Activated naive CD4-positive, alpha-beta T cell treated with anti-CD3 and anti-CD28 coated beads for 36 hours (primary cell): ENCODE measurements at regions of chr1 and their contacts with region 1.

Region 1: DNA sequence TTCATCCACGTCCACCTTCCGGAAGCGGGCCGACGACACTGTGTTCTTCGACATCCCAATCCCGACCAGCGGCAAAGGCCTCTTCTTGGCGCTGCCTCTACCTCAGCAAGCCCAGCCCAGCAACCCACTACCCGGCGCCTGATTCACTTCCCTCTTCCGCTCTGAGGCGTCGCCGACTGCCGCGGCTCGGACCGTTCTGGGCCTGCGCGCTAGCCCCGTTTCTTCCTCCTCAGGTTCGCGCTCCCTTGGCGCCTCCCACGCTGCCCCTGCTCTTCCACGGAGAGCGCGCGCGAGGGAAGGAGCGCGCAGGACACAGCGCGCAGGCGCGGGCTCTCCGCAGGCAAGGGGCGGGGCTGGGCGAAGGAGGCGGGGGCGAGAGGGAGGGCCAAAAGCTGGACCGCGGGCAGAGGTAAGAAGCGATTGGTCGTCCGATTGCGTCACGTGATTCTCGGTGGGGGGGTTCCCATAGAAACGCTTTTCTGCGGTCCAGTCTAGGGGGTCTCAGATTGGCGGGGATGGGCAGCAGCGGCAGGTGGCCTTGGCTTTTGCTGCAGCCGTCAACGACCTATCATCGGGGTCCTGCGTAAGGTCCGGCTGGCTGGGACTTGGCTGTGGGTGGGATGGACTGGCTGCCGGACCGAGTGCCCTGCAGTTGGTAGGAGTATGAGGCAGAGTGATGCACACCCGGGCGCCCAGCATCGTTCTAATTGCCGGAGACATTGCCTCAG is at the start of gene ARPC5:
- DNase-seq: peak; percentile 97
- H3K4me3 Mint-ChIP-seq: peak within 1 kb of the TSS; percentile 98
- H3K27ac Mint-ChIP-seq: peak within 1 kb of the TSS; percentile 99
- H3K4me1 Mint-ChIP-seq: peaks cover 27% of the 10 kb centered on the region
- H3K27me3 Mint-ChIP-seq: no peaks in the 10 kb centered on the region
- total RNA-seq, gene ARPC5: 162 to 164 TPM

Region 2: DNA sequence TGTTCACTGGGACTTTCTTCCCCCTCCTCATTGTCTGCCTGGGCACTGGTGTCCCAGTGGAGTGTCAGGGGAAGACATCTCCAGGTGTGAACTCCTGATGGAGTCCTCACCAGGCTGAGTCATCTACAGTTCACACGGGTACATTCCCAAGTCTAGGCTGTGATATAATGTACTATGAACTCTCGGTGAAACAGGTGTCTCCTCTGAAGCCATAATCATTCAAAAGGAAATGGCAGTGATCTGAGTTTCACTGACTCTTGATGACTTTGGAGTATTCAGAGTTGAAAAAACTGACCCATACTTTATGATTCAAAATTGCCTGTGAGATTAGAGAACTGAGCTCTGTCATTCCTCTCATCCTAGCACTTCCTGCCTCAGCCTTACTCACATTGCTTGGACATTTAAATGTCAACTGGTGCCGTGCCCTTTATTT is 440.6 kb before region 1 on chr1:
- CTCF ChIA-PET with region 1: no interaction called
- intact Hi-C with region 1: loop called (anchors 1 kb)
- DNase-seq: no peak
- H3K4me3 Mint-ChIP-seq: no peak overlapping the region
- H3K27ac Mint-ChIP-seq: no peak overlapping the region
- H3K4me1 Mint-ChIP-seq: peaks cover 12% of the 10 kb centered on the region
- H3K27me3 Mint-ChIP-seq: peaks cover 5% of the 10 kb centered on the region

Region 3: DNA sequence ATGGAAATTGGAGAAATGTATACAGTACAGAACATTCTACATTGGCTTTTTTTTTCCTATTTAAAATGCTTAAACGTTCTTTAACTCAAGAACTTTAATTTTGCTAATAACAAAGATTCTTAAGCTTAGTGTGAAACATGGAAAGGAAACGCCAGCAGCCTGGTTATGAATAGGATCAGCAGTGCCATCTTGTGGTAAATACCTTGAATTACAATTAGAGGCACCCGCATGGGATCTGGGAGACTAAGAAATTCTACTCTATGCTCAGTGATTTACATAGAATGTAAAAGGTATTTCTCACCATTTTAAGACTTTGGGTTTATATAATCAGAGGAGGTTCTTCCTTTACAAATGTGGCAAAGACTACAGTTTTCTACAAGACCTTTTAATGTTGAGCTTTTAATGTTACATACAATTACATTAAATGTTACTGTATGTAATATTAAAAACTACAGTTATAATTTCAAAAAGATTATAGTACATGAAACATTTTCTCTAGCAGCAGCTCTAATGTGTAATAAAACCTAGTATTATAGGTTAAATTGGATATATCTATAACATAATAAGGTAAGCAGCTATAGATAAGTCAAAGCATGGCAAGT is 49.4 kb after region 1 on chr1:
- CTCF ChIA-PET with region 1: interaction called, 12 read pairs
- intact Hi-C with region 1: loop called (anchors 1 kb)
- DNase-seq: peak; percentile 41
- H3K4me3 Mint-ChIP-seq: no peak overlapping the region
- H3K27ac Mint-ChIP-seq: no peak overlapping the region
- H3K4me1 Mint-ChIP-seq: peaks cover 8% of the 10 kb centered on the region
- H3K27me3 Mint-ChIP-seq: no peaks in the 10 kb centered on the region

Region 4: DNA sequence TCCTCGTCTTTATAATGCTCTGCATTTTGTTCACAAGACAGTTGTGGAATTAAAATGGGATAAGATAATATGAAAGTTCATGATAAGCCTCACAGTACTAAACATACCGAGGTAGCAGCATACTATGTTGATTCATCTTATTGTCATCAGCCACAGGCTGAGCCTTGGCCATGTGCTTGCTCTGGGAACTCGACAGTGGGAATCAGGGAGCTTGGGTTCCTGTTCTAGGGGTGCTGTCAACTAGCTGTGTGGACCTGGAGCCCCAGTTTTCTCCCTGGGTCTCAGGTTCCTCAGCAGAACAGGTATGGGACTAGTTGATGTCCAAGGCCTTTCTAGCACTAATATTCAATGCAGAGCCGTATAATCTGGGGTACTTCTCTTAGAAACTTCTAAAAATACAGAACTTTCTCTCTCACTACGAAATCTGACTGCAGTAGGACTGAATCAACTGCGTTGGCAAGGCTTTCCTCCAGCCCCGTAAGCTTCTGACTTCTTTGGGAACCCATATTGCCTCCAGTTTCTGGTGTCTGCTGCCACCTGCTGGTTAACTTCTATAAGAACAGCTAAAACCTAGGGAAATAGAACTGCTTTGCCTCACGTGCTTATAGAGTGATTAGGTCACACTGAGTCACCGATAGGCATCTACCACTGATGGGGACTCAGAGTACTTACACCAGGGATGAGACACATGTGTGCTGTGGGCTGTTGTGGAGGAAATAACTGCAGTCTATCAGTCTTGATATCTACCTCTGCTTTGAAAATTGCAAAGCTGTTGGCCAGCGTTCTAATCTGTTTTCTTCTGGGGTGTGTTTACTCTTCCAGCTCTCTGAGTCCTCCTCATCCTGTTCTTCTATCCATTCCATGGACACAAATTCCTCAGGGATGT is 280.1 kb after region 1 on chr1:
- CTCF ChIA-PET with region 1: no interaction called
- intact Hi-C with region 1: loop called (anchors 1 kb)
- DNase-seq: peak; percentile 86
- H3K4me3 Mint-ChIP-seq: no peak overlapping the region
- H3K27ac Mint-ChIP-seq: peak overlapping the region; percentile 6
- H3K4me1 Mint-ChIP-seq: peaks cover 20% of the 10 kb centered on the region
- H3K27me3 Mint-ChIP-seq: no peaks in the 10 kb centered on the region

Region 5: GRCh38 chr1:184051485-184052193 is 415.9 kb after region 1 on chr1 and contains the start of gene TSEN15:
- CTCF ChIA-PET with region 1: no interaction called
- intact Hi-C with region 1: loop called (anchors 2 kb)
- DNase-seq: peak; percentile 84
- H3K4me3 Mint-ChIP-seq: peak within 1 kb of the TSS; percentile 96
- H3K27ac Mint-ChIP-seq: peak within 1 kb of the TSS; percentile 96
- H3K4me1 Mint-ChIP-seq: peaks cover 34% of the 10 kb centered on the region
- H3K27me3 Mint-ChIP-seq: peaks cover 5% of the 10 kb centered on the region
- total RNA-seq, gene TSEN15: 52.6 to 57.6 TPM

Region 6: GRCh38 chr1:185044981-185045813 is 1409.4 kb after region 1 on chr1 and contains the start of gene RNF2:
- CTCF ChIA-PET with region 1: no interaction called
- intact Hi-C with region 1: loop called (anchors 10 kb)
- DNase-seq: peak; percentile 83
- H3K4me3 Mint-ChIP-seq: peak within 1 kb of the TSS; percentile 89
- H3K27ac Mint-ChIP-seq: peak within 1 kb of the TSS; percentile 69
- H3K4me1 Mint-ChIP-seq: peaks cover 30% of the 10 kb centered on the region
- H3K27me3 Mint-ChIP-seq: no peaks in the 10 kb centered on the region
- total RNA-seq, gene RNF2: 19.2 to 23.4 TPM